ENCODE measurements at regions of chr6 and their contacts with region 1.

Region 1: GRCh38 chr6:56708810-56709597 is 66.3 kb upstream of the DST start:
- DNase-seq: no peak
- H3K4me3 ChIP-seq: no peak overlapping the region
- H3K27ac ChIP-seq: peak overlapping the region in 1 of 2 donors; percentile 8
- H3K4me1 ChIP-seq: no peaks in the 10 kb centered on the region
- H3K27me3 ChIP-seq: no peaks in the 10 kb centered on the region
- CTCF ChIP-seq: peak; percentile 57 to 64 (median 59)
- POLR2A ChIP-seq: no peak

Region 2: DNA sequence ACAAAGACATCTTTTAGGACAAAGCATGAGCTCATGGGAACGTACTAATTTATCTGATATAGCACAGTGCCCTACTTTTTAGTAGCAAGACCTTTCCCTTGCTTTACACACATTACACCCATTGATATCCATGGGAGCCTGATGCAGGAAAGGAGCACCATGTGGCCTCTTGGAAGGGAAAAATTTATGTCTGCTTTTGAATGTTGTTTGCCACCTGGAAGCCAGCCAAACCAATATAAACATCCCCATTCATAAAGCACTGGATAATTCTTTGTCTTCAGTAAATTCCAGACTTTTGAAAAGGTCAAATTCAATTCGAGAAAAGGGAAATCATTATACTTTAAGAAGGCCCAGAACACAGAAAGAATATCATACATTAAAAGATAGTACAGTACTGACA is 93.6 kb after region 1 on chr6:
- intact Hi-C with region 1: no loop called
- DNase-seq: no peak
- H3K4me3 ChIP-seq: no peak overlapping the region
- H3K27ac ChIP-seq: no peak overlapping the region
- H3K4me1 ChIP-seq: no peaks in the 10 kb centered on the region
- H3K27me3 ChIP-seq: no peaks in the 10 kb centered on the region
- CTCF ChIP-seq: no peak
- POLR2A ChIP-seq: no peak

Region 3: GRCh38 chr6:56843573-56844349 is 134.8 kb after region 1 on chr6:
- intact Hi-C with region 1: loop called (anchors 5 kb)
- DNase-seq: peak; percentile 64 to 67
- H3K4me3 ChIP-seq: peak overlapping the region; percentile 71 to 77
- H3K27ac ChIP-seq: peak overlapping the region; percentile 85 to 87
- H3K4me1 ChIP-seq: peaks cover 0 to 13% of the 10 kb centered on the region in 2 donors
- H3K27me3 ChIP-seq: no peaks in the 10 kb centered on the region
- CTCF ChIP-seq: peak; percentile 54 to 65 (median 58)
- POLR2A ChIP-seq: peak; percentile 9 to 41

Region 4: DNA sequence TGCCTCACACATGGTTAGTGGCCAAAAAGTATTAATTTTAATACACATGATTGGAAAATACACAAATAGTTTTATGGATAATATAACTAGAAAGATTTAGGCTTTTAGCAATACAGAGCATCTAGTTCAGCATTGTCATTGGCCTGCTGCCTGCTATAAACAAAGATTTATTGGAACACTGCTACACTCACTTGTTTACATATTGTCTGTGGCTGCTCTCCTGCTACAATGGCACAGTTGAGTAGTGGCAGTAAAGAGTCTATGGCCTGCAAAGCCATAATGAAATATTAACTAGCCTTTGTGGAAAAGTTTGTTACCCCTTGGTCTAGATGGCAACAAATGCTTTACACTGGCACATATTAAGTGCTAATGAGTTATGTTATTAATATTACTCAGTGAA is 418.8 kb after region 1 on chr6:
- intact Hi-C with region 1: no loop called
- DNase-seq: no peak
- H3K4me3 ChIP-seq: no peak overlapping the region
- H3K27ac ChIP-seq: no peak overlapping the region
- H3K4me1 ChIP-seq: peaks cover 0 to 6% of the 10 kb centered on the region in 2 donors
- H3K27me3 ChIP-seq: no peaks in the 10 kb centered on the region
- CTCF ChIP-seq: no peak
- POLR2A ChIP-seq: no peak

Measured in uterus (tissue), 4 donors.